GM10248 (cell line): ENCODE measurements at regions of chr16 and their contacts with region 1.

Region 1: DNA sequence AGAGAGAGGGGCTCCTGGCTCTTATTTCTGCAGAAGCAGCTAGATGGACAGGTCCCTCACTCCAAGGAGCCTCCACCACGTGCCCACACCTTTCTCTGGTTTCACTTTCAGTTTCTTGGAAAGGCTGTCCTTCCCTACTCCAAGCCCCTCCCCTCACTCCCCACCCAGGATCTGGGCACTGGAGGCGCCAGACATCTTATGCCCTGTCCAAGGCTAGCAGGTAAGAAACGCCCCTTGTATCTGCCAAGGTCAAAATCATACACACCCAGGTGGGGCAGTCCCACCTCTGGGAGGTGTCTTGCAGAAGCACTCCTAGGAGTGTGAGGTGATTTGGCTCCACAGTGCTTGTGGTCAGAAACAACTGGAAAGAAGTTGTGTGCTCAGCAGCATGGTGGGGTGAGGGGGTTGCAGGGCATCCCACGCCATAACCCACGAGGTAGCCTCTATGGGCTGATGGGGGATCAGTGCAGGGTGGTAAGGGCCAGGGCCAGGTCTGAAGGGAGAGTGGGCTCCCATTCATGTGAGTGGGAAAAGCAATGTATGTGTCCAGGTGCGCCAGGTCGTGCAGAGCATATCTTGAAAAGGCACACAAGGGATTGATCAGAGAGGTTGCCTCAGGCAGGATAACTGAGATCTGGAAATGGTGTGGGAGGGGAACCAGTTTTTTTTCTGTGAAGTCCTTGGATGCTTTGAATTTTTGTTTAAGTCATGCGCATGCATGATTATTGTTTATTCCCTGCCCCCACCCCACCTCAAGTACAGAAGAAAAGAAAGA is 31.8 kb upstream of the PRM1 start:
- DNase-seq: no peak
- CTCF ChIP-seq: no peak

Region 2: DNA sequence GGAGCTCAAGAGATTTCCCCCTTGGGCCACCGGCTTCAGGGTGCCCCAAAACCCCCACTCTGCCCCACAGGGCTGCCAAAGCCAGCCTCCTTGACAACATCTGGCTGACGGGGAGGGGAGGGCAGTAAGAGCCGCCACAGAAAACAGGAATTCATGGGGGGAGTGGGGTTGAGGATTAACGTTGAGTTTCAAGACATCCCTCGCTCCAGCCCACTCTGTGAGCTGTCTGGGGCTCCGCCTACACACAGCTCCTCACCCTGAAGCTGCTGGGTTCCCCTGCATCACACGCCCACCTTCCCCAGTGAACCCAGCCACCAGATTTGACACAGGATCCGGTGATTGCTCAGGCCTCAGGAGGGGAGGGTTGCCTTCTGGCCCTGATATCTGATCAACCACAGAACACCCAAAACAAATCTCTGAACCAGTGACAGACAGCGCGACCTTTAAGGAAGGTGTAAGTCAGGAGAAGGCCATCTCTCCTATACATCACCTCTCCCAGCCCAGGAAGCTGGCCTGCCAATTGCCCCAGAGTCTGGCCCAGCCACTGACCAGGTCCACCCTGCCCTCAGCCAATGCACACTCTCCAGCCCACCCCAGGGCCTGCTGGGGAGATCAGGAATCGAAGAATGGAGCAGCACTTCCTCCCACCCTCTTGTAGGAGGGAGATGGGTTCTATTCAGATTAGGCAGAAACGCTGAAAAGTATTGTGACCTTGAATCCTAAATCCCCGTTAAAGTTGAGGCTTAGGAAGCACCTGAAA is 236.5 kb before region 1 on chr16:
- CTCF ChIA-PET with region 1: no interaction called
- POLR2A ChIA-PET with region 1: no interaction called
- DNase-seq: peak; percentile 89
- CTCF ChIP-seq: no peak

Region 3: GRCh38 chr16:11297492-11298142 is 15.3 kb before region 1 on chr16:
- CTCF ChIA-PET with region 1: interaction called, 36 read pairs
- POLR2A ChIA-PET with region 1: interaction called, 3 read pairs
- DNase-seq: peak; percentile 79
- CTCF ChIP-seq: no peak

Region 4: GRCh38 chr16:11423315-11424117 is 110.6 kb after region 1 on chr16:
- CTCF ChIA-PET with region 1: no interaction called
- POLR2A ChIA-PET with region 1: no interaction called
- DNase-seq: peak; percentile 58
- CTCF ChIP-seq: no peak